ENCODE measurements at regions of chr12 and their contacts with region 1.

Region 1: GRCh38 chr12:12899530-12900380 is 8.4 kb downstream of the GPRC5A start:
- DNase-seq: peak; percentile 76
- H3K4me3 ChIP-seq: no peak overlapping the region
- H3K27me3 ChIP-seq: no peaks in the 10 kb centered on the region
- CTCF ChIP-seq: no peak

Region 2: DNA sequence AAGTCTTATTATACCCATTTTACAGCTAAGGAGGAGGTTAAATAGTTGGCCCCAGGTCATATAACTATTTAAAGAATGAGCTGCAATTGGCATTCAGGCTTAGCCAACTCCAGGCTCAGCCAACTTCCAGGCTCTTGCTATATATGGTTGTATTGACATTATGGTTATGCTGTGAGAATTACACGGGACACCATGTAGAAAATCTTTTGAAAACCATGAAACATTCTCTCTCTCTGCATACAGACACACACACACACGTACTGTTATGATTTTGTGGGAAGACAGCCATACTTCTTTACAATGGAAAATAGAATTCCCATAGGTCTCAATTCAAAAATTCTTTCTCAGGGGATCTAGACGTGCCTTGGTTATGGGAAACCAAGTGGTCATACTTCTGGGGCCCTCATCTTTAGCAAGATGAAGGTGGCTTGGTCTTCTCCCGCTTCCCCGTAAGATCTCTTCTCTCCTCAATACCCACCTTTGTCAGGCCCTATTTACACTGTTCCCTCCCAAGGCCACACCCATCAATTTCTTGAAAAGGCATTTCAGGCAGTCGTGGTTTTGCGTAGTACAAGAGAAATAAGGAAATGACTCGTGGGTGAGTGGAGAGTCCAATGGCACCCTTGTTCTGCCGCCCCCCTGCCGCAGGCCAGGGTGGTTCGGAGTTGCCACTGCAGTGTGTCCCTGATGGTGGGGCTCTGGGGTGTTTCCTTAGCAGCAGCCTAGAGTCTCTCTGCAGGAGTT is 18.4 kb before region 1 on chr12:
- CTCF ChIA-PET with region 1: no interaction called
- POLR2A ChIA-PET with region 1: no interaction called
- DNase-seq: no peak
- H3K4me3 ChIP-seq: no peak overlapping the region
- H3K27me3 ChIP-seq: no peaks in the 10 kb centered on the region
- CTCF ChIP-seq: no peak

Region 3: GRCh38 chr12:13179211-13180074 is 279.7 kb after region 1 on chr12:
- CTCF ChIA-PET with region 1: no interaction called
- POLR2A ChIA-PET with region 1: interaction called, 10 read pairs
- DNase-seq: no peak
- H3K4me3 ChIP-seq: no peak overlapping the region
- H3K27me3 ChIP-seq: no peaks in the 10 kb centered on the region
- CTCF ChIP-seq: no peak

Region 4: GRCh38 chr12:13404631-13405473 is 505.1 kb after region 1 on chr12:
- CTCF ChIA-PET with region 1: no interaction called
- POLR2A ChIA-PET with region 1: no interaction called
- DNase-seq: no peak
- H3K4me3 ChIP-seq: no peak overlapping the region
- H3K27me3 ChIP-seq: no peaks in the 10 kb centered on the region; the same call in 1 of the 2 replicates
- CTCF ChIP-seq: no peak

Measured in BJ (cell line).